Activated CD4-positive, alpha-beta T cell treated with anti-CD3 and anti-CD28 coated beads for 36 hours (primary cell): ENCODE measurements at regions of chr19 and their contacts with region 1.

Region 1: DNA sequence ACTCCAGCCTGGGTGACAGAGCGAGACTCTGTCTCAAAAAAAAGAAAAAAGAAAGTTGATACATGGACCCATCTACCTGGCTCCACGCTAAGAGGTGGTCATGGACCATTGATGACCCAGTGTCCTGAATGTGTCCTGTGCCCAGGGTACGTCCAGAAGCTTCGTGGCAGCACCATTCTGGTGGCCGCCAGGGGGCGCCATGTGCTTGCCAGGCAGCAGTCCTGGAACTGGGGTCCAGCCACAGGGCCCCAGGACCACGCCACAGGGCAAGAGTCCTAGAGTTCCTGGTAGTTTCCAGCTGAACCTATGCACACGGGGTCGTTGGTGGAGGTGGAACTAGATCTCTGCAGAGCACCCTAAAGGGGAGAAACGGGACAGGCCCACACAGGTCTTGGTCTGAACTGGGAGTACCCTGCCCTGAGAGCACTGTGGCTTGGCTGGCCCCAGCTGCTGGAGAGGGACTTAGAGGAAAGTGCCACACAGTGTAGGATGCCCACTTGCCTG is 19.9 kb upstream of the FBXO27 start:
- DNase-seq: peak; percentile 83
- ATAC-seq: peak; percentile 78
- H3K4me3 Mint-ChIP-seq: no peak overlapping the region
- H3K27ac Mint-ChIP-seq: no peak overlapping the region
- H3K4me1 Mint-ChIP-seq: no peaks in the 10 kb centered on the region
- H3K27me3 Mint-ChIP-seq: no peaks in the 10 kb centered on the region

Region 2: GRCh38 chr19:38333245-38333644 is 719.0 kb before region 1 on chr19:
- CTCF ChIA-PET with region 1: no interaction called
- POLR2A ChIA-PET with region 1: no interaction called
- intact Hi-C with region 1: no loop called
- DNase-seq: no peak
- ATAC-seq: no peak
- H3K4me3 Mint-ChIP-seq: no peak overlapping the region
- H3K27ac Mint-ChIP-seq: no peak overlapping the region
- H3K4me1 Mint-ChIP-seq: peaks cover 6% of the 10 kb centered on the region
- H3K27me3 Mint-ChIP-seq: no peaks in the 10 kb centered on the region

Region 3: GRCh38 chr19:39038098-39038497 is 14.2 kb before region 1 on chr19:
- CTCF ChIA-PET with region 1: interaction called, 10 read pairs
- POLR2A ChIA-PET with region 1: no interaction called
- intact Hi-C with region 1: no loop called
- DNase-seq: peak; percentile 41
- ATAC-seq: peak; percentile 61
- H3K4me3 Mint-ChIP-seq: no peak overlapping the region
- H3K27ac Mint-ChIP-seq: no peak overlapping the region
- H3K4me1 Mint-ChIP-seq: no peaks in the 10 kb centered on the region
- H3K27me3 Mint-ChIP-seq: peaks cover 6% of the 10 kb centered on the region

Region 4: DNA sequence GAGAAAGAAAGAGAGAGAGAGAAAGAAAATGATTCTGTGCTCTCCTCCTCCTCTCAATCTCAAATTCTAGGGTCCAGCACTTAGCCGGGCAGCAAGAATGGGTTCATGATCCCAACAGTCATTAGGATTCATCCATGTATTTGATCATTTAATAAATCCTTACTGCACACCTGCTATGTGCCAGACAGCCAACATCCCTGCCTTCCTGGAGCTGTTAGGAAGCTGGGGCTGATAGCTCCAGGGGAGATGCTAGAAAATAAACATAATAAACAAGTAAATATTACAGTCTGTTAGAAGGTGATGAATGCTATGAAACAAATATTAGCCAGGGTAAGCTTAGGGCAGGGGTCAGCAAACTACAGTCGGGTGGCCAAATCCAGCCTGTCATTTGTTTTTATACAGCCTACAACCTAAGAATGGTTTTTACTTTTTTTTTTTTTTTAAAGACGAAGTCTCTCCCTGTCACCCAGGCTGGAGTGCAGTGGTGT is 22.0 kb after region 1 on chr19:
- CTCF ChIA-PET with region 1: interaction called, 10 read pairs
- POLR2A ChIA-PET with region 1: no interaction called
- intact Hi-C with region 1: no loop called
- DNase-seq: no peak
- ATAC-seq: no peak
- H3K4me3 Mint-ChIP-seq: peak overlapping the region; percentile 24
- H3K27ac Mint-ChIP-seq: peak overlapping the region; percentile 91
- H3K4me1 Mint-ChIP-seq: peaks cover 16% of the 10 kb centered on the region
- H3K27me3 Mint-ChIP-seq: no peaks in the 10 kb centered on the region

Region 5: GRCh38 chr19:39110263-39110967 is 58.1 kb after region 1 on chr19:
- CTCF ChIA-PET with region 1: no interaction called
- POLR2A ChIA-PET with region 1: no interaction called
- intact Hi-C with region 1: loop called in 1 of 2 experiments (anchors 2 kb)
- DNase-seq: peak; percentile 85
- ATAC-seq: peak; percentile 86
- H3K4me3 Mint-ChIP-seq: no peak overlapping the region
- H3K27ac Mint-ChIP-seq: no peak overlapping the region
- H3K4me1 Mint-ChIP-seq: no peaks in the 10 kb centered on the region
- H3K27me3 Mint-ChIP-seq: no peaks in the 10 kb centered on the region

Region 6: DNA sequence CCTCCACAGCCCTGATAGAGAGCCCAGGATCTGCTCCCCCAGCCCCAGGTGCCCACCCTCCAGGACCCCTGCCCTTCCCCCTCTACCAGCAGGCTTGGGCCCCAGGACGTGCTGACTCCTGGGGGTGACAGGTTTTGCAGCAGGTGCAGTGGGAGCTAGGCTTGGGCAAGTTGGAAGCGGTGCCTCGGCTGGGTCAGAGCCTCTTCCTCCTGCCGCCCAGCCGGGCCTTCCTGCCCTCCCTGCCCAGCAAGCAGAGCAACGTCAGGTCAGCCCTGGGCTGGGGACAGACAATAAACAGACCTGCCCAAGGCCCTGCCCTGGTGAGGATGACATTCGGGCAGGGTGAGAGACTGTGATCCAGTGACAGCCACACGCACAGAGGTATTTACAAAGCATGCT is 135.3 kb after region 1 on chr19:
- CTCF ChIA-PET with region 1: no interaction called
- POLR2A ChIA-PET with region 1: no interaction called
- intact Hi-C with region 1: loop called in 1 of 2 experiments (anchors 5 kb)
- DNase-seq: no peak
- ATAC-seq: no peak
- H3K4me3 Mint-ChIP-seq: no peak overlapping the region
- H3K27ac Mint-ChIP-seq: no peak overlapping the region
- H3K4me1 Mint-ChIP-seq: no peaks in the 10 kb centered on the region
- H3K27me3 Mint-ChIP-seq: peaks cover 9% of the 10 kb centered on the region